CD14-positive monocyte (primary cell): ENCODE measurements at regions of chr16 and their contacts with region 1.

Region 1: GRCh38 chr16:84985079-84986065 is 26.0 kb downstream of the ZDHHC7 start:
- DNase-seq: peak in 2 of 3 donors; percentile 23 to 36
- H3K4me3 ChIP-seq: peak overlapping the region in 1 of 3 experiments; percentile 46
- H3K4me3 Mint-ChIP-seq: peak overlapping the region in 1 of 2 donors; percentile 11
- H3K27ac ChIP-seq: peak overlapping the region; percentile 84 to 91
- H3K27ac Mint-ChIP-seq: peak overlapping the region; percentile 85 to 99 (median 97)
- H3K4me1 ChIP-seq: peaks cover 55 to 70% of the 10 kb centered on the region in 2 donors
- H3K4me1 Mint-ChIP-seq: peaks cover 76% of the 10 kb centered on the region
- H3K27me3 ChIP-seq: no peaks in the 10 kb centered on the region
- H3K27me3 Mint-ChIP-seq: peaks cover 0 to 7% (median 0%) of the 10 kb centered on the region in 3 donors
- CTCF ChIP-seq: no peak

Region 2: DNA sequence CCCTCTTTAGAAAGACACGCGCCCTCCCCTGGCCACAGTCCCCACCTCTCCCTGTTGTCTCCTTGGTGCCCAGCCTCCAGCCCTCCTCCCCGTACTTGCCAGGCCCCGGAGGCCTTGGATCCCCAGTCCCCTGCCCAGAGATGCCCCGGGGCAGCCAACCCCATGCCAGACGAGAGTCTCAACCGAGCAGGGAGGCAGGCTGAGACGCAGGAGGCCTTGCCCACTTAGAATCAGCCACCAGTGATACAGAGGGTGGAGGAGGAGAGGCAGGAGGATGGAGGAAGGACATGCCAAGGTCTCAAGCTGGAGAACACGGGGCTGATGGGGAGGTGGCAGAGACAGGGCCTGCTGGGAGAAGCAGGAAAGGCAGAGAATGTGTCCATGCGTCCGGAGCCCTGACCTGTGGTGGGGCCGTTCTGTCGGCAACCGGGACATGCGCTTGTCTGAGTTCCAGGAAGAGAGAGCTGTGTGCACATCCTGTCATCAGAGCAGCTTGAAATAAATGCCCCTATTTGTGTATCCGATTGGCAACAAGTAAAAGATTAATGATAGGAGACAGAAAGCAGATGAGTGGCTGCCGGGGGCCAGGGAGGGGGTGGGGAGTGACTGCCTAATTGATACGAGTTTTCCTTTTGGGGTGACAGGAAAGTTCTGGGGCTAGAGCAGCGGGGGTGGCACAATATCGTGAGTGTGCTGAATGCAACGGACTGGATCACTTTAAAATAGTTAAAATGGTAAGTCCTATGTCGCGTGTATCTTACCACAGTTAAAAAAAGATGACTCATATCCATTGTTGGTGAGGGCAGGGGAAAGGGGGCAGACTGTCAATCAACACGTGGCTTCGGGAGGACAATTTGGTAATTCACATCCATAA is 436.2 kb before region 1 on chr16:
- intact Hi-C with region 1: no loop called
- DNase-seq: peak in 1 of 3 donors; percentile 36
- H3K4me3 ChIP-seq: no peak overlapping the region
- H3K4me3 Mint-ChIP-seq: peak overlapping the region in 1 of 2 donors; percentile 64
- H3K27ac ChIP-seq: no peak overlapping the region
- H3K27ac Mint-ChIP-seq: peak overlapping the region in 2 of 7 donors; percentile 5 to 6
- H3K4me1 ChIP-seq: peaks cover 10 to 21% of the 10 kb centered on the region in 2 donors
- H3K4me1 Mint-ChIP-seq: peaks cover 38% of the 10 kb centered on the region
- H3K27me3 ChIP-seq: peaks cover 0 to 15% of the 10 kb centered on the region in 2 donors
- H3K27me3 Mint-ChIP-seq: peaks cover 17 to 30% (median 17%) of the 10 kb centered on the region in 3 donors
- CTCF ChIP-seq: no peak

Region 3: DNA sequence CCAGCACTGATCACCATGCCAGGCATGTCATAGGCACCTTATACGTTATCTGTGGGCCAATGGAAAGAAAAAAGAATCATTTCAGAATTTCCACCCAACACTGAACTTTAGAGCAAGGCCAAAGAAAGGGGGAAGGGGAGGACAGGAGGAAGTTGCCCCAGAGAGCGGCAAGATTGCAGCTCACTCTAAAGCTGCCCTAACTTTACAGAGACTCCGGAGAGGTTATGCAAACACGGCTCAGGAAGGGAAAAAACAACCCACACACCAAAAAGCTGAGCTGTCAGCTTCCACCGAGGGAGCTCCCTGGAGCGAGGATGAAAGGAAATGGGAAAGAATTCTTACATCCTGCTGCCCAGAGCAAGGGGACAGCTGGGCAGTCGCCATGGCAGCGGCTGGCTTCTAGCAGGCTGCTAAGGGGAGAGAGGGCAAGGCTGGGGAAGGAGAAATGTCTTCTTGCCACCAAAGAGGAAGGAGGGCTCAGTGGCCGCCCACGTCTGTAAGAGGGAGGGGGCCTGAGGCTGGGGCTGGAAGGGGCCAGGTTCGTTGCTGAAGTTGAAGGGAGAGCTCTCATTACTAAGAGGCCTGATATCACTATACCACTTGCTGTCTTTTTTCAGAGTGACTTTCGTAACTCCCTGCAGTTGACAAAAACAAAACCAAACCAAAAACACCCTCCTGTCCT is 385.7 kb before region 1 on chr16:
- intact Hi-C with region 1: loop called in 1 of 2 experiments (anchors 10 kb)
- DNase-seq: peak; percentile 87 to 94 (median 93)
- H3K4me3 ChIP-seq: peak overlapping the region; percentile 13 to 59 (median 18)
- H3K4me3 Mint-ChIP-seq: peak overlapping the region; percentile 77 to 87
- H3K27ac ChIP-seq: peak overlapping the region; percentile 99
- H3K27ac Mint-ChIP-seq: peak overlapping the region; percentile 99 to 100 (median 100)
- H3K4me1 ChIP-seq: peaks cover 95 to 98% of the 10 kb centered on the region in 2 donors
- H3K4me1 Mint-ChIP-seq: peaks cover 87% of the 10 kb centered on the region
- H3K27me3 ChIP-seq: no peaks in the 10 kb centered on the region
- H3K27me3 Mint-ChIP-seq: peaks cover 0 to 11% (median 0%) of the 10 kb centered on the region in 3 donors
- CTCF ChIP-seq: no peak

Region 4: GRCh38 chr16:85061566-85061965 is 76.2 kb after region 1 on chr16:
- intact Hi-C with region 1: loop called in 1 of 2 experiments (anchors 2 kb)
- DNase-seq: peak; percentile 89 to 97 (median 96)
- H3K4me3 ChIP-seq: peak overlapping the region in 1 of 3 experiments; percentile 55
- H3K4me3 Mint-ChIP-seq: peak overlapping the region; percentile 61 to 82
- H3K27ac ChIP-seq: peak overlapping the region; percentile 89 to 96
- H3K27ac Mint-ChIP-seq: peak overlapping the region; percentile 94 to 99 (median 98)
- H3K4me1 ChIP-seq: peaks cover 58 to 68% of the 10 kb centered on the region in 2 donors
- H3K4me1 Mint-ChIP-seq: peaks cover 65% of the 10 kb centered on the region
- H3K27me3 ChIP-seq: no peaks in the 10 kb centered on the region
- H3K27me3 Mint-ChIP-seq: no peaks in the 10 kb centered on the region
- CTCF ChIP-seq: no peak

Region 5: DNA sequence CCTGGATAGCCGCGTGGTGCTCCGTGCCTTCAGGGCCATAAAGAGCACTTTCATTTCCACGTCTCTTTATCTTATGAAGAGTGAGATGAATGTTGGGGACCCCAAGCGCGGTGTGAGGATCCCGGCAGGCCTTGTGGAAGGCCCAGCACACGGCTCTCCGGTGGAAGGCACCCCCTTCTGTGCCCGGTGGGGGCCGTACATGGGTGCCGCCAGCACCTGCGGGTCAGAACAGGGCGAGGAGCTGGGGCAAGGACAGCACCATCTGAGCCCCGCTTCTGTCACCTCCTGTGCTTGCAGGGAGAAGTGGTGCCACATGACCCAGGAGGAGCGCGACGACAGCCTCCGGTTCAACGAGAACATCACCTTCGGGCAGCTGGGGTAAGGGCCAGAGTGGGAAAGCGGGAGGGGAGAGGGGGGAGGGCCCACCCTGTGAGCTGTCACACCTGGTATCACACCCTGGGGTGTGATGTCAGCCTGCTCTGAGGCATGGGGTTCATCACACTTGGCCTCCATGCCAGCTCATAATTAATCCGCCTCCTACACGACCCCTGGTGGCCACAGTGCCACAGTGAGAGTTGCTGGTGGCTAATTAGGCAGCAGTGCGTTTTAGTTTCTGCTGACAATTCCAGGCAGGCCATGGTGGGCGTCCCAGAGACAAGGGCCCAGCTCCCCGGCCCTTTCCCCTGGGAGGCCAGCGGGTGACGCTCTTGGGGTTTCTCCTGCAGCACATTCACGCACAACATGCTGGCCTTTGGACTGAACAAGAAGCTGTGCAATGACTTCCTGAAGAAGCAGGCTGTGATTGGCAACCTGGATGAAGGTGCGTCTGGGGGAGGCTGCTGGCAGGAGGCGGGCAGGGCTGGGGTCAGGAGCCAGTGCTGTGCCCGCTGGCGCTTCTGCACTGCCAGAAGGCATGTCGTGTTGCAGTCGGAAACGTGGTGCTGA is 101.2 kb after region 1 on chr16:
- intact Hi-C with region 1: loop called in 1 of 2 experiments (anchors 2 kb)
- DNase-seq: peak; percentile 61 to 63 (median 63)
- H3K4me3 ChIP-seq: no peak overlapping the region
- H3K4me3 Mint-ChIP-seq: no peak overlapping the region
- H3K27ac ChIP-seq: peak overlapping the region in 1 of 2 donors; percentile 50
- H3K27ac Mint-ChIP-seq: peak overlapping the region in 1 of 7 donors; percentile 2
- H3K4me1 ChIP-seq: peaks cover 39 to 56% of the 10 kb centered on the region in 2 donors
- H3K4me1 Mint-ChIP-seq: peaks cover 52% of the 10 kb centered on the region
- H3K27me3 ChIP-seq: no peaks in the 10 kb centered on the region
- H3K27me3 Mint-ChIP-seq: peaks cover 0 to 6% (median 1%) of the 10 kb centered on the region in 3 donors
- CTCF ChIP-seq: peak; percentile 75

Region 6: DNA sequence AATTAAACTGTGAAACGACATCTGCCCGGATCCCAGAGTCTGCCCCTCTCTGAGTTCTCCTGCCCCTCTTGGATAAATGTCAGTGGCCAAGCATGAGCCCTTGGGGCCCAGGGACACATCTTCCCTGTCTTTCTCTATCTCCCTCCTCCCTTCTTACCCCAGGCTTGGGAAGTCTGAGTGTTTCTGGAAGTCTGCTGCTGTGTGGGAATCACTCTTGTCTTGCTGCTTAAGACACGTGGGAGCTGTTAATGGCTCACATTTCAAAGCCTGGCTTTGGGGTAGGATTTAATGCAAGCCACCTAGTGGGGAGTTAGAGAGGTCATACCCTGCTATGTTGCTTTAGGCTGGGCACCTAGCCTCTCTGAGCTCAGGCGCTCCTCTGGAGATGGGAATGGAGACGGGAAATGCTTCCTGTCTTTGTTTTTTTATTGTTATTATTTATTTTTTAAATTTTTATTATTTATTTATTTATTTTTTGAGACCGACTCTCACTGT is 345.4 kb after region 1 on chr16:
- intact Hi-C with region 1: no loop called
- DNase-seq: peak; percentile 29 to 43 (median 38)
- H3K4me3 ChIP-seq: no peak overlapping the region
- H3K4me3 Mint-ChIP-seq: peak overlapping the region in 1 of 2 donors; percentile 56
- H3K27ac ChIP-seq: no peak overlapping the region
- H3K27ac Mint-ChIP-seq: peak overlapping the region in 1 of 7 donors; percentile 5
- H3K4me1 ChIP-seq: peaks cover 9 to 14% of the 10 kb centered on the region in 2 donors
- H3K4me1 Mint-ChIP-seq: peaks cover 26% of the 10 kb centered on the region
- H3K27me3 ChIP-seq: peaks cover 18 to 41% of the 10 kb centered on the region in 2 donors
- H3K27me3 Mint-ChIP-seq: peaks cover 50 to 64% (median 63%) of the 10 kb centered on the region in 3 donors
- CTCF ChIP-seq: peak; percentile 50